ENCODE measurements at regions of chr1 and their contacts with region 1.

Region 1: GRCh38 chr1:21963477-21964217 is 13.2 kb upstream of the CELA3B start:
- DNase-seq: peak; percentile 75 to 79
- H3K4me3 ChIP-seq: no peak overlapping the region
- H3K27ac ChIP-seq: no peak overlapping the region
- H3K4me1 ChIP-seq: peaks cover 0 to 3% of the 10 kb centered on the region in 2 donors
- H3K27me3 ChIP-seq: no peaks in the 10 kb centered on the region
- CTCF ChIP-seq: peak; percentile 76 to 92 (median 89)
- POLR2A ChIP-seq: no peak

Region 2: GRCh38 chr1:21799730-21800129 is 163.9 kb before region 1 on chr1:
- intact Hi-C with region 1: loop called (anchors 5 kb)
- DNase-seq: no peak
- H3K4me3 ChIP-seq: no peak overlapping the region
- H3K27ac ChIP-seq: no peak overlapping the region
- H3K4me1 ChIP-seq: no peaks in the 10 kb centered on the region
- H3K27me3 ChIP-seq: no peaks in the 10 kb centered on the region
- CTCF ChIP-seq: no peak
- POLR2A ChIP-seq: no peak

Region 3: DNA sequence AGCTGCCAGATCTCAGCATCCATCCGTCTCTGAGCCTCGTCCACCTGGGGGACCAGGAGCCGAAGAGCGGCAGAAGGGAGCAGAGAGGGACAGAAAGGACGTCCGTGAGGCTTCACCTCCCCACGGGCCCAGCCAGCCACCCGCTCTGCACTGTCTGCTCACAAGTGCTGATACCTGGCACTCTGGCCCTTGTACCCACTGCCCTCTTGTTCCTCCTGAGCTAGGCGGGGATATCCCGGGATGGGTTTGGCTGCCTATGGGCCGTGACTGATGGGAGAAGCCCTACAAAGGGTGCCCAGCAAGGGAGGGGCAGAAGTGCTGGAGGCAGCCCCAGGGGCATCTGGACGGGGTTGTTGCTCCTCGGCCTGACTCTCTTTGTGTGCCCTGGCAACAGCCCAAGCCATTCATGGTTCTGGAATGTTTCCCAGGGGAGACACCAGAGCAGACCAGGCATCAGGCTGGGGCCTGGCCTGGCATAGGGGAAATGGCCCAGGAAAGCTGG is 94.0 kb before region 1 on chr1:
- intact Hi-C with region 1: loop called (anchors 5 kb)
- DNase-seq: peak; percentile 91 to 95
- H3K4me3 ChIP-seq: no peak overlapping the region
- H3K27ac ChIP-seq: peak overlapping the region in 2 of 3 donors; percentile 41 to 67
- H3K4me1 ChIP-seq: peaks cover 8 to 16% of the 10 kb centered on the region in 2 donors
- H3K27me3 ChIP-seq: no peaks in the 10 kb centered on the region
- CTCF ChIP-seq: no peak
- POLR2A ChIP-seq: no peak

Measured in thyroid gland (tissue), 4 donors.